CD4-positive, alpha-beta memory T cell (primary cell): ENCODE measurements at regions of chr11 and their contacts with region 1.

Region 1: GRCh38 chr11:118051611-118052461 is 25.0 kb upstream of the TMPRSS4 start:
- DNase-seq: peak; percentile 86 to 91 (median 89)
- H3K4me3 ChIP-seq: peak overlapping the region in 1 of 2 donors; percentile 33
- H3K4me3 Mint-ChIP-seq: peak overlapping the region in 7 of 8 donors; percentile 69 to 93 (median 80)
- H3K27ac ChIP-seq: peak overlapping the region; percentile 57
- H3K27ac Mint-ChIP-seq: peak overlapping the region; percentile 95 to 100 (median 99)
- H3K4me1 ChIP-seq: peaks cover 67% of the 10 kb centered on the region
- H3K4me1 Mint-ChIP-seq: peaks cover 45 to 68% (median 59%) of the 10 kb centered on the region in 4 donors
- H3K27me3 ChIP-seq: no peaks in the 10 kb centered on the region
- H3K27me3 Mint-ChIP-seq: peaks cover 0 to 2% of the 10 kb centered on the region in 2 donors

Region 2: GRCh38 chr11:117817368-117818040 is 234.3 kb before region 1 on chr11:
- CTCF ChIA-PET with region 1: interaction called, 81 read pairs
- POLR2A ChIA-PET with region 1: interaction called, 39 read pairs
- intact Hi-C with region 1: no loop called
- DNase-seq: peak; percentile 75 to 82 (median 79)
- H3K4me3 ChIP-seq: no peak overlapping the region
- H3K4me3 Mint-ChIP-seq: peak overlapping the region in 5 of 8 donors; percentile 43 to 74 (median 61)
- H3K27ac ChIP-seq: peak overlapping the region; percentile 74
- H3K27ac Mint-ChIP-seq: peak overlapping the region; percentile 80 to 94 (median 93)
- H3K4me1 ChIP-seq: peaks cover 52% of the 10 kb centered on the region
- H3K4me1 Mint-ChIP-seq: peaks cover 26 to 69% (median 45%) of the 10 kb centered on the region in 4 donors
- H3K27me3 ChIP-seq: no peaks in the 10 kb centered on the region
- H3K27me3 Mint-ChIP-seq: no peaks in the 10 kb centered on the region

Region 3: GRCh38 chr11:117851106-117851505 is 200.7 kb before region 1 on chr11:
- CTCF ChIA-PET with region 1: interaction called, 286 read pairs
- POLR2A ChIA-PET with region 1: no interaction called
- intact Hi-C with region 1: no loop called
- DNase-seq: no peak
- H3K4me3 ChIP-seq: no peak overlapping the region
- H3K4me3 Mint-ChIP-seq: no peak overlapping the region
- H3K27ac ChIP-seq: no peak overlapping the region
- H3K27ac Mint-ChIP-seq: no peak overlapping the region
- H3K4me1 ChIP-seq: no peaks in the 10 kb centered on the region
- H3K4me1 Mint-ChIP-seq: peaks cover 6 to 7% (median 6%) of the 10 kb centered on the region in 4 donors
- H3K27me3 ChIP-seq: no peaks in the 10 kb centered on the region
- H3K27me3 Mint-ChIP-seq: peaks cover 8 to 9% of the 10 kb centered on the region in 2 donors

Region 4: GRCh38 chr11:117979481-117980211 is 72.2 kb before region 1 on chr11:
- CTCF ChIA-PET with region 1: interaction called, 153 read pairs
- POLR2A ChIA-PET with region 1: interaction called, 1,775 read pairs
- intact Hi-C with region 1: no loop called
- DNase-seq: peak in 1 of 5 donors; percentile 44
- H3K4me3 ChIP-seq: no peak overlapping the region
- H3K4me3 Mint-ChIP-seq: peak overlapping the region in 7 of 8 donors; percentile 12 to 64 (median 47)
- H3K27ac ChIP-seq: no peak overlapping the region
- H3K27ac Mint-ChIP-seq: peak overlapping the region; percentile 49 to 95 (median 83)
- H3K4me1 ChIP-seq: peaks cover 62% of the 10 kb centered on the region
- H3K4me1 Mint-ChIP-seq: peaks cover 47 to 85% (median 70%) of the 10 kb centered on the region in 4 donors
- H3K27me3 ChIP-seq: no peaks in the 10 kb centered on the region
- H3K27me3 Mint-ChIP-seq: no peaks in the 10 kb centered on the region

Region 5: GRCh38 chr11:118021146-118021545 is 30.7 kb before region 1 on chr11:
- CTCF ChIA-PET with region 1: interaction called, 21 read pairs
- POLR2A ChIA-PET with region 1: interaction called, 1,775 read pairs
- intact Hi-C with region 1: no loop called
- DNase-seq: no peak
- H3K4me3 ChIP-seq: no peak overlapping the region
- H3K4me3 Mint-ChIP-seq: no peak overlapping the region
- H3K27ac ChIP-seq: no peak overlapping the region
- H3K27ac Mint-ChIP-seq: no peak overlapping the region
- H3K4me1 ChIP-seq: peaks cover 11% of the 10 kb centered on the region
- H3K4me1 Mint-ChIP-seq: peaks cover 16 to 24% (median 20%) of the 10 kb centered on the region in 4 donors
- H3K27me3 ChIP-seq: no peaks in the 10 kb centered on the region
- H3K27me3 Mint-ChIP-seq: no peaks in the 10 kb centered on the region

Region 6: GRCh38 chr11:119067371-119068222 is 1015.8 kb after region 1 on chr11 and contains the start of gene VPS11:
- CTCF ChIA-PET with region 1: no interaction called
- POLR2A ChIA-PET with region 1: no interaction called
- intact Hi-C with region 1: no loop called
- DNase-seq: peak; percentile 97 to 98 (median 97)
- H3K4me3 ChIP-seq: peak within 1 kb of the TSS; percentile 87 to 99
- H3K4me3 Mint-ChIP-seq: peak within 1 kb of the TSS; percentile 91 to 99 (median 94)
- H3K27ac ChIP-seq: peak within 1 kb of the TSS; percentile 88
- H3K27ac Mint-ChIP-seq: peak within 1 kb of the TSS; percentile 92 to 100 (median 98)
- H3K4me1 ChIP-seq: peaks cover 34% of the 10 kb centered on the region
- H3K4me1 Mint-ChIP-seq: peaks cover 23 to 43% (median 36%) of the 10 kb centered on the region in 4 donors
- H3K27me3 ChIP-seq: no peaks in the 10 kb centered on the region
- H3K27me3 Mint-ChIP-seq: no peaks in the 10 kb centered on the region
- total RNA-seq, gene VPS11: 56.2 to 61.2 TPM